ENCODE measurements at regions of chr11 and their contacts with region 1.

Region 1: GRCh38 chr11:83156150-83156995 is 558 bp upstream of the PCF11 start:
- DNase-seq: peak; percentile 98 to 100 (median 99)
- ATAC-seq: peak; percentile 95 to 98 (median 96)
- H3K4me3 ChIP-seq: peak overlapping the region; percentile 43 to 92 (median 70)
- H3K27ac ChIP-seq: peak overlapping the region; percentile 71 to 99 (median 91)
- H3K4me1 ChIP-seq: peaks cover 2 to 31% (median 19%) of the 10 kb centered on the region in 12 donors
- H3K27me3 ChIP-seq: no peaks in the 10 kb centered on the region
- CTCF ChIP-seq: no peak
- POLR2A ChIP-seq: peak; percentile 17 to 52

Region 2: GRCh38 chr11:82900277-82901164 is 255.9 kb before region 1 on chr11 and contains the start of gene PRCP:
- intact Hi-C with region 1: loop called in 7 of 10 experiments (anchors 2 to 10 kb)
- DNase-seq: peak; percentile 94 to 97 (median 95)
- ATAC-seq: peak; percentile 94 to 96 (median 96)
- H3K4me3 ChIP-seq: peak within 1 kb of the TSS; percentile 55 to 93 (median 74)
- H3K27ac ChIP-seq: peak within 1 kb of the TSS; percentile 31 to 93 (median 86)
- H3K4me1 ChIP-seq: peaks cover 0 to 53% (median 23%) of the 10 kb centered on the region in 12 donors
- H3K27me3 ChIP-seq: no peaks in the 10 kb centered on the region
- CTCF ChIP-seq: peak in 1 of 12 donors; percentile 32
- POLR2A ChIP-seq: peak in 1 of 2 donors; percentile 92
- total RNA-seq, gene PRCP: 29.7 to 99.4 (median 44.0) TPM

Region 3: DNA sequence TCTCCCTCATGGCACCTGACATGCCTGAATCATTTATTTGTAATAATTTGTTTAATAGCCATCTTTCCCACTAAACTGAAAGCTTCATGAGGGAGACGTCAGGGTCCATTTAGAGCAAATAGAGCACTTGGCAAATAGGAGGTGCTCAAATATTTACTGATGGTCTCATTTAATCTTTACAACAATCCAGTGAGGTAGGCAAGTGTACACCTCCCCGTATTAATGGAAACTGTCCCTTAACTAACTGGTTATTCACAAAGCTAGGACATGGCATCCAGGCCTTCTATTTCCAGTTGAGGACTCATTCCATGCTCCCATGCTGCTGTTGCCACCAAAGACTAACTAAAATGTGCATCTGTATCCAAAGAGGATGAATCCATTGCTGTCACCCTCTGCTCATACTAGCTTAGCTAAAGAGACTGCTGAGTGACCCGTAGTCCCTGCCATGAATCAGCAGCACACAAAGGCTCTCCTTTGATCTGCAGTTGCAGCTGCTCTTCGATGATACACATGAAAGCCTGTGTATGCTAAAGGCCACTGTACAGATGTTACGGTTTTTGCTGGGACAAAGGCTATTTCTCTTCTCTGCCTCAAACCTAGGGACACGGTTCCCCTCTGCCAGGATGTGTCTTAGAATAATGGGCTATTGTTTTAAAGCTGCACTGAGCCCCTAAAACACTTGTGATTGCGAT is 167.3 kb before region 1 on chr11:
- intact Hi-C with region 1: loop called in 3 of 10 experiments (anchors 5 to 10 kb)
- DNase-seq: no peak
- ATAC-seq: peak in 1 of 4 donors; percentile 8
- H3K4me3 ChIP-seq: no peak overlapping the region
- H3K27ac ChIP-seq: peak overlapping the region in 1 of 12 donors; percentile 11
- H3K4me1 ChIP-seq: peaks cover 0 to 52% (median 14%) of the 10 kb centered on the region in 12 donors
- H3K27me3 ChIP-seq: no peaks in the 10 kb centered on the region
- CTCF ChIP-seq: no peak
- POLR2A ChIP-seq: no peak

Region 4: DNA sequence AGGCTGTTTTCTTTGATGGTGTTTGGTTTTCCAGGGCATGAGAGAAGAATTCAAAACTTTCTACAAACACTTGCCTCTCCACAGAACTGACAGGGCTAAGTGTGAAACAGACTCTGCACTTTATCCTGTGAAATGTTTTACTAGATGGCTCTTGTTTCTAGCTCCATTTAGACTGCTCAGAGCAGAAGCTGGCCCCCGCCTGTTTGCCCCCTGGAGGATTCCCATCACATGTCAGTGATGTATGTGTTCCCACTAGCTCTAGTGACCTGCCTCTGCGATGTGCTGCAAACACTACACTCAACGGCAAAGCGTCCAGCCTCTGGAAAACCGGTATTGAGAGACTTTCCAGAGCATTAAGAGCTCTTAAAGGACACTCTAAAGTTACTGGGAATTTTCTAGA is 40.8 kb before region 1 on chr11:
- intact Hi-C with region 1: loop called in 1 of 10 experiments (anchors 5 kb)
- DNase-seq: peak in 2 of 5 donors; percentile 21 to 32
- ATAC-seq: no peak
- H3K4me3 ChIP-seq: peak overlapping the region in 1 of 12 donors; percentile 13
- H3K27ac ChIP-seq: peak overlapping the region in 1 of 12 donors; percentile 37
- H3K4me1 ChIP-seq: peaks cover 0 to 15% (median 0%) of the 10 kb centered on the region in 12 donors
- H3K27me3 ChIP-seq: no peaks in the 10 kb centered on the region
- CTCF ChIP-seq: peak in 1 of 12 donors; percentile 8
- POLR2A ChIP-seq: no peak

Region 5: GRCh38 chr11:83265331-83265730 is 109.0 kb after region 1 on chr11:
- intact Hi-C with region 1: no loop called
- DNase-seq: no peak
- ATAC-seq: no peak
- H3K4me3 ChIP-seq: no peak overlapping the region
- H3K27ac ChIP-seq: no peak overlapping the region
- H3K4me1 ChIP-seq: no peaks in the 10 kb centered on the region
- H3K27me3 ChIP-seq: no peaks in the 10 kb centered on the region
- CTCF ChIP-seq: no peak
- POLR2A ChIP-seq: no peak

Region 6: DNA sequence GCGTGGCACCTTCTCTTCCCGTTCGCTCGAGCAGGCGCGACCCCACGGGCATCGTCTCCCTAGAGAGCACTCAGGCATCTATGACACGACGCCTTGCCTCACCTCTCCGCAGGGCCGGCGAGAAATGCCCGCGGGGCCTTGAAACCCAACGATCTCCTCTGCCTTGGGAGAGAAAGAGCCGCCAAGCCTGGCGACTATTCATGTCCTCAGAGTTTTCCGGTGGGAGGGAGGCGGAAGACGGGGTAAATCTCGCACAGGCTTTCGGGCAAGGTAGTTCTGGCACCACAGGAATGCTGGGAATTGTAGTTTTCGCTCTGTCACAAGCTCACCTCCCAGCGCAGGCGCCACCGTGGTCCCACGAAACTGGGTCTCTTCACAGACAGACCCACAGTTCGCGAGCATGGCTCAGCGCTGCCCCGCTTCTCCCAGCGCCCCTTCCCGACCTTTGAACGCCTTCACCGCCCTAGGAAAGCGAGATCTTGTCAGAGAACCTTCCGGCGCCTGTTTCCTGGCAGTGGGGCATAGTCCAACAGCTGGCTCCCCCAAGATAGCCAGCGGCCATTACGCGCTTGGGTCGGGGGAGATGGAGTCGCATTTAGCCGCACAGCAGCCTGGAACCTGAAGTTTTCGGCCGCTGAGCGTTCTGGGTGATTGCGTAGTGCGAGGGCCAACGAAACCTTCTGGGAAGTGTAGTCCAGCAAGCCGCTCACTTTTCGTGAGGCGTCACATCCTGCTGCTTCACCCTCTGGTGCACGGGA is 129.6 kb after region 1 on chr11 and contains the start of gene CCDC90B:
- intact Hi-C with region 1: loop called in 1 of 10 experiments (anchors 5 kb)
- DNase-seq: peak; percentile 95 to 98 (median 96)
- ATAC-seq: peak; percentile 98 to 99 (median 98)
- H3K4me3 ChIP-seq: peak within 1 kb of the TSS; percentile 29 to 99 (median 83)
- H3K27ac ChIP-seq: peak within 1 kb of the TSS; percentile 90 to 99 (median 98)
- H3K4me1 ChIP-seq: peaks cover 0 to 45% (median 26%) of the 10 kb centered on the region in 12 donors
- H3K27me3 ChIP-seq: no peaks in the 10 kb centered on the region
- CTCF ChIP-seq: peak in 3 of 12 donors; percentile 14 to 46 (median 29)
- POLR2A ChIP-seq: peak in 1 of 2 donors; percentile 84
- total RNA-seq, gene CCDC90B: 18.0 to 31.7 (median 26.7) TPM

Measured in heart left ventricle (tissue), 16 donors.